Activated T-helper 2 cell treated with anti-CD3 and anti-CD28 coated beads, Interferon-gamma antibody, Interleukin-2, Interleukin-4, amounts not matched to agents 10 μg/mL and 5 μg/mL and 100 μg/mL, durations not matched to agents 14 hours and 24 hours and 36 hours (primary cell): ENCODE measurements at regions of chrX and their contacts with region 1.

Region 1: DNA sequence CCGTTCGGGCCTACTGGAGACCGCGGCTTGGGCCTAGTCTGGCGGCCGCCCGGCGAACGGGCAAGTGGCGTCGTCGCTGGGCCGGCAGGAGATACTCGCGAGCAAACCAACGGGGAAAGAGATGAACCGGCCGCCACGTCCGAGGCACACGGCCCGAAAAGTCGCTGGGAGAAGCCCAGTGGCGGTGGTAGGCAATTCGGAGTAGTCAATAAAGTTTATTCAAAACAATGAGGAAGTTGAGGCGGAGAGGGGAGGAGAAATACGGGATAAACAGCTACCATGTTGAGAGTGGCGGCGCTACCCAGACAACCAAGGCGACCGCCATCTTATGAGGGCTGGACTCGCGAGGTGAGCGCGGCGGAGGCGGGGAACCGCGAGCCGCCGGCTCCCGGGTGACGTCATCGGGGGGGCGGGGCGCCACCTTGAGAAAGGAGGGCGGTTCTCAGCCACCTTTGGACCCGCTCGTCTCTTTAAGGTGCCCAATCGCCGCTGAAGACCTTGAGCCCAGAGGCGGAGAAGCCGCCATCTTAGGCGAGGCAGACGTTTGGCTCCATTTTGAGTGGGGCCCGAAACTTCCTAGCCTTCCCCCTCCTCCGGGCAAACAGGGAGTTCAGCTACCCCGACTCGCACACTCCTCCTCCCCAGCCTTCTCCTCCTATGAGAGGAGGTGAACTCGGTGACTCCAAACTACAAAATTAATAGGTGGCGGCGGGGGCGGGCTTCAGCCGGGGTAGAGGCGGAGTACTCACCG is at the start of gene PHF8:
- DNase-seq: peak; percentile 93
- H3K4me3 Mint-ChIP-seq: peak within 1 kb of the TSS; percentile 88
- H3K27ac Mint-ChIP-seq: peak within 1 kb of the TSS; percentile 97
- H3K4me1 Mint-ChIP-seq: peaks cover 15% of the 10 kb centered on the region
- H3K27me3 Mint-ChIP-seq: no peaks in the 10 kb centered on the region
- total RNA-seq, gene PHF8: 41.8 and 47.5 TPM in 2 replicates

Region 2: DNA sequence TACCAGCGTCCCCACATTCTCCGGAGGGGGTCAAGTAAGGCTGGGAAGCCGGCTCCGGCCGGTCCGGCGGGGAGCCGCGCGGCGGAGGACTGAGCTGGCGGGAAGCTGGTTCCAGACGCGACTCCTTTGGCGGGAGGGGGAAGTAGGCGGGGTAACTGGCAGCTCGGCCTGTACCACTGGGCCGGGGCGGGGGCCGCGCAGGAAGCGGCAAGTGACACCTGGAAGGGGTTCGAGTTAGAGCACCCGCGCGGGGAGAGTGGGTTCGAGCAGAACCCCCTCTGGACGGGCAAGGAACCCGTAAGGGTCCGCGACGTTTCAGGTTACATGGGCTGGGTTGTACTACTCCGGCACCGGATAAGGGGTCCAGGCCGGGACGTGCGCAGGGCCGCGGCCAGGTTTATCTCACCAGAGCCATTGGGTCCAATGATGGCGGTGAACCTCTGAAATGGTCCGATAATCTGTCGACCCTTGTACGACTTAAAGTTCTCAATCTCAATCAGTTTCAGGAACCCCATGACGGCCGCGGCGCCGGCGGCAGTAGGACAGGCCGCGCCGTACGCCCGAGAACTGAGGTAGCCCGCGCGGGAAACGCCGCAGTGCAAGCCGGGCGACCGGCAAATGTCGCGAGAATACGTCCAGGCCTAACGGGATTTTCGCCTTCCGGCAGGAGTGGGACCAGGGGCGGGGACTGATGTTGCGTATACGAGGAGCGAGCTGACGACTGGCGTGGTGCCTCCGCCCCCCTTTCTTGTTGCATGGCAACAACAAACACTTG is 622.0 kb before region 1 on chrX and contains the start of gene SMC1A:
- intact Hi-C with region 1: loop called (anchors 5 kb)
- DNase-seq: peak; percentile 94
- H3K4me3 Mint-ChIP-seq: peak within 1 kb of the TSS; percentile 95
- H3K27ac Mint-ChIP-seq: peak within 1 kb of the TSS; percentile 79
- H3K4me1 Mint-ChIP-seq: peaks cover 25% of the 10 kb centered on the region
- H3K27me3 Mint-ChIP-seq: no peaks in the 10 kb centered on the region
- total RNA-seq, gene SMC1A: 134 and 136 TPM in 2 replicates

Region 3: DNA sequence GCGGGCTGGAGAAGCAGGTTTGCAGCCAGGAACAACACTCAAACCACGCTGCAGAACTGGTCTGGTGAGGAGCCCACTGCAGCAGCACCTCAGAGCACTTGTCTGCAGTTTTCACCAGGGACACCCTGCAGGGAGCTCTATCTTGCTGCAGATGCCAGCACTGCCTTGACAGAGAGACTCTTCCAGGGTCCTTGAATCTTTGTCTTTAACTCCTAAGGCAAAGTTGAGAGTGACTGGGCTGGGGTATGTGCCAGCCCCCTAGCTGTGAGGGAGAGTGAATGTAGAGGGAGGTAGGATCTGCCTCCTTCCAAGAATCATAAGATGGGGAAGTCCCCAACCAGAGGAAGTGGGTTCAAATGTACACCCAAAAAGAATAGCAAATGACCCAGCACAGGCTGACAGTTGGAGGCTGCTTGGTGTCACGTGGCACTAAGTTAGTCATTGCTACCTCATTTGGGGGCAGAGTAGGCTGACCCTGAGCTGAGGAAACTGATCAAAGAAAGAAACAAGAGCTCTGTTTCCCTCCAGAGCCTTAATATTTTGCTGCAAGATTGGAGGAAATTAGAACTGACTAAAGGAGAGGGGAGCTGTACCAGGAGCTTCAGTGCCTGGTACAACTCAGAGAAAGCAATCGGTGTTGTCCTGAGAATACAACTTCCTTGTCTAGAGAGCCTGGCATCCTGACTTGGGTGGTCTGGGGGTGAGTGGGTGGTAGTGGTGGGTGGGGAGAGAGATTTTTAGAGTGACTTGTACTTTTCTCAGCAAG is 329.5 kb before region 1 on chrX:
- intact Hi-C with region 1: loop called (anchors 5 kb)
- DNase-seq: peak; percentile 69
- H3K4me3 Mint-ChIP-seq: peak overlapping the region; percentile 86
- H3K27ac Mint-ChIP-seq: peak overlapping the region; percentile 99
- H3K4me1 Mint-ChIP-seq: peaks cover 46% of the 10 kb centered on the region
- H3K27me3 Mint-ChIP-seq: no peaks in the 10 kb centered on the region

Region 4: DNA sequence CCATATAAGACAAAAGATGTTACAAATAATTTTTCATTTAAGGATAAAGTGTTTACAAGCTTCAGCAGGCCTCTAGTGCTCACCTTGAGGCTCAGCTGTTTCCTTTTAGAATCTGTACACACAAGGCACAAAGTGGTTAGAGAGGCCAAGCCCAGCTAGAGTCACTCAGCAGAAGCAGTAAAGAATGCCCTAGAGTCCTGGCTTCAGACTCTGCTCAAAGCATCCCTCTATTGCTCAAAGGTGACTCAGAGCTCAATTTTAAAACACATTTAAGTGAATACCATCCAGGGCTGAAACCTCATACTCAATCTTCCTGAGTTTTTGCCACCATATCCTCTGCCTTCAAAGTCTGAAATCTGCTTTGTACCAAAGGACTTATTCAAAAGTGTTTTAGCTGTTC is 22.5 kb after region 1 on chrX:
- intact Hi-C with region 1: no loop called
- DNase-seq: no peak
- H3K4me3 Mint-ChIP-seq: no peak overlapping the region
- H3K27ac Mint-ChIP-seq: no peak overlapping the region
- H3K4me1 Mint-ChIP-seq: no peaks in the 10 kb centered on the region
- H3K27me3 Mint-ChIP-seq: no peaks in the 10 kb centered on the region

Region 5: GRCh38 chrX:54439967-54440871 is 395.9 kb after region 1 on chrX and contains the start of gene TSR2:
- intact Hi-C with region 1: loop called (anchors 5 kb)
- DNase-seq: peak; percentile 72
- H3K4me3 Mint-ChIP-seq: peak within 1 kb of the TSS; percentile 96
- H3K27ac Mint-ChIP-seq: peak within 1 kb of the TSS; percentile 87
- H3K4me1 Mint-ChIP-seq: peaks cover 13% of the 10 kb centered on the region
- H3K27me3 Mint-ChIP-seq: no peaks in the 10 kb centered on the region
- total RNA-seq, gene TSR2: 36.8 and 37.7 TPM in 2 replicates

Region 6: GRCh38 chrX:54808605-54809483 is 764.5 kb after region 1 on chrX:
- intact Hi-C with region 1: loop called (anchors 5 kb)
- DNase-seq: peak; percentile 88
- H3K4me3 Mint-ChIP-seq: peak overlapping the region; percentile 89
- H3K27ac Mint-ChIP-seq: peak overlapping the region; percentile 84
- H3K4me1 Mint-ChIP-seq: peaks cover 8% of the 10 kb centered on the region
- H3K27me3 Mint-ChIP-seq: peaks cover 14% of the 10 kb centered on the region